ENCODE measurements at regions of chr14 and their contacts with region 1.

Region 1: GRCh38 chr14:21455911-21456667 is at the start of gene CHD8:
- DNase-seq: peak; percentile 100
- H3K4me3 Mint-ChIP-seq: peak within 1 kb of the TSS; percentile 91
- H3K27ac Mint-ChIP-seq: peak within 1 kb of the TSS; percentile 98
- H3K4me1 Mint-ChIP-seq: peaks cover 31% of the 10 kb centered on the region
- H3K27me3 Mint-ChIP-seq: no peaks in the 10 kb centered on the region
- total RNA-seq, gene CHD8: 80.1 to 87.7 TPM

Region 2: DNA sequence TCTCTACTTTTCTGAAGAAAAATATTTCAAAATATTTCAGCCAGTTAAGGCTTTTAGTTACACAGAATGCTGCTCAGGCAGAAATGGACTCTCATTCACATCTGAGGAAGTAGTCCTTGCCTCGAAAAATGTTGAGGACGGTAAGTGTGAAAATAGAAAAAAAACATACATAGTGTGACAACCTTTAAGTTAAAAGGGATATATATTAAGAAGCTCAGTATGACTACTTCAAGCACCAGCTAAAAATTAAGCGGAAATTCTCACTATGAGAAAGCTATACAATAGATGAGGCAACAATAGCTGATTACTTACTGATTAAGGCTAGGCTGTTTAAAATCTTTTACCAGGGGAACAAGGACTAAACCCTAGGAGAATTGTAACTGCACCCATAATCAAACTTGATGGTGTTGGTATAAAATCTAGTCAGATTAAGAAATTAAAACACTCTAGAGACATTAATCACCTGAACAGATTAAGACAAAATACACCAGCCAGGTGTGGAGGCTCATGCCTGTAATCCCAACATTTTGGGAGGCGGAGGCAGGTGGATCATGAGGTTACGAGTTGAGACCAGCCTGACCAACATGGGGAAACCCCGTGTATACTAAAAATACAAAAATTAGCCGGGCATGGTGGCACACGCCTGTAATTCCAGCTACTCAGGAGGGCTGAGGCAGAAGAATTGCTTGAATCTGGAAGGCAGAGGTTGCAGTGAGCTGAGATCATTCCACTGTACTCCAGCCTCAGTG is 240.8 kb before region 1 on chr14:
- CTCF ChIA-PET with region 1: interaction called, 3 read pairs
- POLR2A ChIA-PET with region 1: interaction called, 4 read pairs
- intact Hi-C with region 1: loop called (anchors 5 kb)
- DNase-seq: no peak
- H3K4me3 Mint-ChIP-seq: no peak overlapping the region
- H3K27ac Mint-ChIP-seq: peak overlapping the region; percentile 86
- H3K4me1 Mint-ChIP-seq: peaks cover 74% of the 10 kb centered on the region
- H3K27me3 Mint-ChIP-seq: no peaks in the 10 kb centered on the region

Region 3: DNA sequence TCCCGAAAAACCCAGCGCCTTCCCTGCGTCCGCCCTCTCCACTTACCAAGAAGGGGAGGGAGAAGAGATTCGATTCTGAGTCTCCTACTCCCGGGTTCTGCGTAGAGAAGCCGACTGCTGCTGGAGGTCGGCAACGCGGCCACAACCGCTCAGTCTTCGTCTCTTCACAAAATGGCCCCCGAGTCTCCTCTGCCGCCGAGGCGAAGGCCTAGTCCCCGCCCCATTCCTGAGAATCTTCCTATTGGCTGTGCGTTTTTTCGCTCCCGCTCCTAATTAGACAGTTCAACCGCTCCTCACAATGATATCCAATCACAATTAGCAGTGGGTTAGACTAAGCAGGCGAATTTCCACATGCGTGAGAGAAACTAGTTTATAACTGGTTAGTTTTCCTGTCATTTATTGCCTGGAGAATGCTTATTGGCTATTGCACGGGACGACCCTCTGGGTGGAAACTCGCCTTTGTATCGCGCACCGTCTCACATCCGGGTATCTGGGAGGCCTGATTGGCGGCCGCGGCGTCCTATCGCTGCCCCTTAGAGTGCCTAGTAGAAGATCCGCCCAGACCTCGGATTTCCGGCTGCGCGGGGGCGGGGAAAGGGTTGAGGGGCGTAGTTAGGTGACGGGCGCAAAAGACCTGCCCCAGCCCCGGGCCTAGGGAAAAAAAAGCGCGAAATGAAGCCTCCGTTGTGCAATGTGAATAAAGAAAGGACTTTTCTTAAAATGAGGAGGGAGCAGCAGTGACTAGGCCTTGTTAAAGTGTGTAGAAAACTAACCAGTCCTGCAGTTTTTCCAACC is 186.6 kb before region 1 on chr14 and contains the start of gene HNRNPC:
- CTCF ChIA-PET with region 1: no interaction called
- POLR2A ChIA-PET with region 1: no interaction called
- intact Hi-C with region 1: loop called (anchors 1 kb)
- DNase-seq: peak; percentile 100
- H3K4me3 Mint-ChIP-seq: peak within 1 kb of the TSS; percentile 100
- H3K27ac Mint-ChIP-seq: peak within 1 kb of the TSS; percentile 100
- H3K4me1 Mint-ChIP-seq: peaks cover 24% of the 10 kb centered on the region
- H3K27me3 Mint-ChIP-seq: no peaks in the 10 kb centered on the region
- total RNA-seq, gene HNRNPC: 1,063 to 1,070 TPM

Region 4: GRCh38 chr14:21383848-21384493 is 72.1 kb before region 1 on chr14 and contains the start of gene SUPT16H:
- CTCF ChIA-PET with region 1: interaction called, 5 read pairs
- POLR2A ChIA-PET with region 1: interaction called, 6 read pairs
- intact Hi-C with region 1: loop called (anchors 1 kb)
- DNase-seq: peak; percentile 97
- H3K4me3 Mint-ChIP-seq: peak within 1 kb of the TSS; percentile 95
- H3K27ac Mint-ChIP-seq: peak within 1 kb of the TSS; percentile 98
- H3K4me1 Mint-ChIP-seq: peaks cover 36% of the 10 kb centered on the region
- H3K27me3 Mint-ChIP-seq: no peaks in the 10 kb centered on the region
- total RNA-seq, gene SUPT16H: 156 to 158 TPM

Region 5: DNA sequence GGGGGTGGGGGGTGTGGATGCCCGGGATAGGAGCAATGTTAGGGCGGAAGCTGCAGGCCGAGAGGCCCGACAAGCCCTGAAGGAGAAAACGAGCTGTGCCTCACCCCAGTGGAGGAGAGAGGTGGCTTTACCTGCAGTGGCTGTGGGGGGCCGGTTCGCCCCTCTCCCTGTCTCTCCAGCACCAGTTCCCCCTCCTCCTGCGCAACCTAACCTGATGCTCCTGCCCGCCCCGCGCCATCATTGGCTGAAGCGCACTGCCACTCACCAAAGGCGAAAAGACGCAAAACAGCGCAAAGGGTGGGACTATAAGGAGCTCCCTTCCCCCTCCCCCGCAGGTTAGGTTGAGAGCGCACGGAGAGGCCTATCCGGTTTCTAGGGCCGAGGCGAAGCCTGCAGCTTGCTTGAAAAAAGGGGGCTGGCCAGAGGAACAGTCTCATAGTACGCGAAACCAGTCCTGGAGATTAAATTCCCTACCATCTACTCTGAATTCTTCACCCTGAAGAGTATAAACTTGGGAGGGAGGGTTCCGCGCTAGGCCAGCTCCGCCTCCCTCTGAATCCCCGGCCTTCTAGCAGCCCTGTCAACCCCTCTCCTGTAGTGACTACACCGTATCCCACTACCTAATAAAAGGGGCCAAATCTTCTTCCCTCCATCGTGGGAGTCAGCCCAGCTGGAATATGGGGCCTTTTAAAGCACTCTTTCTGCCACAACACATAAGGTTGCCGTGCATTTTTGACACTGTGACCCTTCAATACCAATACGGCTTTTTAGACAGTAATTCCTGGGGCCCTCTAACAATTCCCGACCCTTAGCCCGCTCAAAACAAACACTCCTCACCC is 18.8 kb before region 1 on chr14:
- CTCF ChIA-PET with region 1: interaction called, 27 read pairs
- POLR2A ChIA-PET with region 1: interaction called, 30 read pairs
- intact Hi-C with region 1: loop called (anchors 1 kb)
- DNase-seq: peak; percentile 99
- H3K4me3 Mint-ChIP-seq: peak overlapping the region; percentile 80
- H3K27ac Mint-ChIP-seq: peak overlapping the region; percentile 71
- H3K4me1 Mint-ChIP-seq: peaks cover 52% of the 10 kb centered on the region
- H3K27me3 Mint-ChIP-seq: no peaks in the 10 kb centered on the region

Region 6: DNA sequence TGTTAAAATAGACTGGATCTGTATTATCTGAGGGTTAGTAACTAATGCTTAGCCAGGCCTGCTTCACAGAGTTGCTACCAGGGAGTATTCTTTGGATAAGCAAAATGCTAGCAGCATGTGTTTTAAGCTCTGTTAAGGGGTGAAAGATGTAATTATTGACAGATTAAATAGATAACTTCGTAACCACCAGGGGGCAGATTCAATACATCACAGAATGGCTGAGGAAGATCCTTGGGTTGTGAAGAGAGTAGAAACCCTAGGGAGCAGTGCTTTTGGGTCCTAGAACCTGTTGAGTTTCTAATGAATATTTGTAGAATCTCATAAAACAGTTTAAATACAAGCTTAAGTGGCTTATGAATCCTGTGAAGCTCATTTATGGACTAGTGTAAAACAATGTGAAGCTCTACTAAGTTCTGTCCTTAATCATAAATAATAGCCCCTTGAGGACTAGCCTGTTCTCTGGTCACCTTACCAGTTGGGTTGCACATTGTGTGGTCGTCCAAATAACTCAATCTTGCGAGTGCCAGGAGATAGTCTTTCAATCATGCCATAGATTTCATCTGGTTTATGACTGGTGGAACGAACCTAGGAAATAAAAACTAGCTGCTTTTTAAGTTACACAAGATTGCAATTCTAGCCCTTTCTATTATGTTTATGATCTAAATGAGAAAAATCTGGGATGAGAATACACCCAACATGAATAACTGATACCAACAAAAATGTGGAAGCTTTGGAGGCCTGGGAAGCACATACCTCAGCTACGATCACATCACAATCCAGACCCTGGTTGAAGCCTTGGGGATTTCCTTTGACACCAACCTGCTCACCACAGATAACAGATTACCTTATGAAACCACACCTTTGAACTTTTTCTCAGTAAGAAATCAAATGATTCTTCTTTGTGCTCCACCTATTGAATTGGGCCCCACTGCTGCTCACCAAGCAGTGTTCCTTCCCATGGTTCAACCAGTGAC is 42.8 kb after region 1 on chr14:
- CTCF ChIA-PET with region 1: interaction called, 13 read pairs
- POLR2A ChIA-PET with region 1: interaction called, 3 read pairs
- intact Hi-C with region 1: no loop called
- DNase-seq: no peak
- H3K4me3 Mint-ChIP-seq: no peak overlapping the region
- H3K27ac Mint-ChIP-seq: peak overlapping the region; percentile 59
- H3K4me1 Mint-ChIP-seq: peaks cover 24% of the 10 kb centered on the region
- H3K27me3 Mint-ChIP-seq: no peaks in the 10 kb centered on the region

Region 7: DNA sequence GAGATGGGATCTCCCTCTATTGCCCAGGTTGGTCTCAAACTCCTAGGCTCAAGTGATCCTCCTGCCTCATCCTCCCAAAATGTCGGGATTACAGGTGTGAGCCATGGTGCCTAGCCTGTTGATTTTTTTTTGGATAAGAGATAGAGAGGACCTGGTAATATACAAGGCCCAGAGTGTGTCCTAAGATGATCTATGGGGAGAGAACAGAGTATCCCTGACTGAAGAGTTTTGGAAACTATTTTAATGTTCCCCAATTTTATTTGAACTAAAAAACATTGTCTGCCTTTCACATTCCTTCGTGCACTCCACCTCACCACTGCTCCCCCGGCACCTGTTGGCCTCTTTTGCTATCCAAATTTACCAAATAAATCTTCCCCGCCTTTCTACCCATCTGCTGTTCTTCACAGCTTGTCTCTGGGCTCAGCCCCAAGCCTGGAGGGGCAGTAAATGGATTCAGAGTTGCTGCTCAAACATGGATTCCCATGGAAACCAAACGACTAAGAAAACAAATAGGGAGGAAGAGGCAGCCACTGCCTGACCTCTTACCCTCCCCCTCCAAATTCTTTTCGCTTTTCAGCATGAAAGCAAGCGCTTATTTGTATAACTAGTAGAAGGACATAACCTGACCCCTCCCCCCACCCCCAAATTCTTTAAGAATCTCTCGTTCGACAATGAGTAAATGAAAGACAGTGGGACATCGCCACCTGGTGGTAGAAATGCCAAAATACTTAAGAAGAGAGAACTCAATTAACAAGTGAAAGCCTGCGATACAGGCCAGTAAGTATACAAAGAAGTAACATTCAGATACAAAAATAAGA is 101.2 kb after region 1 on chr14:
- CTCF ChIA-PET with region 1: interaction called, 4 read pairs
- POLR2A ChIA-PET with region 1: no interaction called
- intact Hi-C with region 1: loop called (anchors 1 kb)
- DNase-seq: peak; percentile 76
- H3K4me3 Mint-ChIP-seq: no peak overlapping the region
- H3K27ac Mint-ChIP-seq: peak overlapping the region; percentile 16
- H3K4me1 Mint-ChIP-seq: peaks cover 5% of the 10 kb centered on the region
- H3K27me3 Mint-ChIP-seq: no peaks in the 10 kb centered on the region